Posterior vena cava (tissue), 2 donors: ENCODE measurements at regions of chr20 and their contacts with region 1.

Region 1: DNA sequence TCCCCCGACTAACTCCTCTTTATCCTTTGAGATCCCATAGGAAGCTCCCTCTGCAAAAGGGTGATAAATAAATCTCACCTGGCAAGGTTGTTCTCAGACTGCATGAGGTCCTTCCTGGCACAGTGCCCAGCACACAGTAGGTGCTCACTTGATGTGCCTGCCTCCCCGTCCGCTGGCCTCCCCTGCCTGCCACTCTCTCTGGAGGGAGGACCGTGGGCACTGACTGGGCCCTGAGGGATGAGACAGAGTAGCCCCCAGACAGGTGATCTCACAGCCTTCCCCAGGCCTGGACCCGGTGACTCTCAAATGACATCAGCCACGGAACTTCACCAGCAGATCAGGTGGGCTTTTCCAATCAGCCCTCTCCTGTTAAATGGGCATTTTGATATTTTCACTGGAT is 57.4 kb downstream of the CHMP4B start:
- DNase-seq: no peak

Region 2: GRCh38 chr20:33837998-33838864 is 30.4 kb before region 1 on chr20:
- intact Hi-C with region 1: loop called in 1 of 2 experiments (anchors 1 kb)
- DNase-seq: no peak

Region 3: GRCh38 chr20:33915726-33916331 is 47.2 kb after region 1 on chr20:
- intact Hi-C with region 1: no loop called
- DNase-seq: no peak

Region 4: DNA sequence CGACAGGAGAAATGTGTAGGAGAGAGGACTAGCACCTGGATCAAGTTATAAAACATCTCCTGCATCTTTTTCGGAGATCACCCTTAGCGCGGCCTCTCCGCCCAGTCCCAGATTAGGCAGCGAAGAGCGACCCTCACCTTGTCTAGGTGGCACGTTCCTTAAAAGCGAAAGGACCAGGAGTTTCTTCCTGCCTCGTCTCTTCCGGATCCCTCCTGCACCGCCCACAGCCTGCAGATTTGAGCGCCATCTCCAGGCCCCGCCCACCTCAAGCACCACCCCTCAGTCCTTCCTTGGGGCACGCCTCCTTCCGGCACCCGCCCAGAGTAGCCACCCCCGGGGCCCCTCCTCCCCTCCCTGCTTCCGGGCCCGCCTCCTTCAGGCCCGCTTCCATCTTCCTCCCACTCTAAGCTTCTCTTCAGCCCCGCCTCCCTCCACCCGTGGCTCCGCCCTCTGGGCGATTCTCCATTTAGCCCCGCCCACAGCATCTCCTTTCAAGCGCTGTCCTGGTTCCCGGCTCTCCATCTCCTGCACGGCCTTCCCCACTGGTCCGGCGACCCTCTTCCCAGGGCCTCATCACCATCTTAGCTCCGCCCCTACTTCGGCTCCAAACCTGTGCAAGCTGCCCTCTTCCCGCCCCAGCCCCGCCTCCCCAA is 124.5 kb after region 1 on chr20:
- intact Hi-C with region 1: no loop called
- DNase-seq: peak; percentile 100